ENCODE measurements at regions of chr5 and their contacts with region 1.

Region 1: GRCh38 chr5:172006321-172007174 is at the start of gene FBXW11:
- DNase-seq: peak; percentile 85 to 98 (median 92)
- ATAC-seq: peak; percentile 86
- H3K4me3 ChIP-seq: peak within 1 kb of the TSS; percentile 92
- H3K4me3 Mint-ChIP-seq: peak within 1 kb of the TSS; percentile 97
- H3K27ac ChIP-seq: peak within 1 kb of the TSS; percentile 96 to 98
- H3K27ac Mint-ChIP-seq: peak within 1 kb of the TSS; percentile 99
- H3K4me1 ChIP-seq: peaks cover 30% of the 10 kb centered on the region
- H3K4me1 Mint-ChIP-seq: peaks cover 57% of the 10 kb centered on the region
- H3K27me3 ChIP-seq: no peaks in the 10 kb centered on the region
- H3K27me3 Mint-ChIP-seq: no peaks in the 10 kb centered on the region
- CTCF ChIP-seq: no peak
- total RNA-seq, gene FBXW11: 20.9 to 24.0 TPM

Region 2: GRCh38 chr5:171152382-171152781 is 854.2 kb before region 1 on chr5:
- CTCF ChIA-PET with region 1: no interaction called
- POLR2A ChIA-PET with region 1: no interaction called
- intact Hi-C with region 1: no loop called
- DNase-seq: no peak
- ATAC-seq: no peak
- H3K4me3 ChIP-seq: no peak overlapping the region
- H3K4me3 Mint-ChIP-seq: no peak overlapping the region
- H3K27ac ChIP-seq: no peak overlapping the region
- H3K27ac Mint-ChIP-seq: no peak overlapping the region
- H3K4me1 ChIP-seq: no peaks in the 10 kb centered on the region
- H3K4me1 Mint-ChIP-seq: no peaks in the 10 kb centered on the region
- H3K27me3 ChIP-seq: no peaks in the 10 kb centered on the region
- H3K27me3 Mint-ChIP-seq: peaks cover 7% of the 10 kb centered on the region
- CTCF ChIP-seq: no peak

Region 3: DNA sequence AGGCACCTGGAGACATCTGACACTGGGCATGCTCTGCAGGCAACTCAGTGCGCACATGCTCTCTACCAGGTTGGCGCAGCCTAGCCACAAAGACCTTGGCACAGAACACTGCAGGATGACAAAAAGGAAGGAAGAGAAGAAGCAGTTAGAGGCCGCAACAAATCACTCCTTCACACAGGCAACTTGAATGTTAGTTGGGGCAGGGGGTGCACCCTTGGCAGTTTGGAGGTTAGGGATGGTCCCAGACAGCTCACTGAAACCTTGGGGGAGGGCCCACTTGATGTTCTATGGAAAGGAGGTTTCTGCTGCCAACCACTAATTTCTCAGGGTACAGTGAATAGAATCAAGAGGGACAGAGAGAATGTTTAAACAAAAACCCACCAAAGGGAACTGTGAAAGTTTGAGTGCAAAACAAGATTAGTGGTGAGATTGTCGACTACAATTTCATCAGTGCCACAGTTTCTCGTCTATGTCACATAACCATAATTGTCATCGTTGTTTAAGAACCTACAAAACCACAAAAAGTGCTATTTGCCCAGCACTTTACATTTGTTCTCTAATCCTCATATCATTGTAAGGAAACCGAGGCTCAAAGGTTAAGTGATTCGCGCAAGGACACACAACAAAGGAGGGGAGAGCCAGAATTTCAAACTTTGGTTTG is 48.8 kb before region 1 on chr5:
- CTCF ChIA-PET with region 1: no interaction called
- POLR2A ChIA-PET with region 1: interaction called, 10 read pairs
- intact Hi-C with region 1: loop called in 1 of 2 experiments (anchors 5 kb)
- DNase-seq: peak in 9 of 14 experiments; percentile 2 to 56 (median 10)
- ATAC-seq: peak; percentile 85
- H3K4me3 ChIP-seq: no peak overlapping the region
- H3K4me3 Mint-ChIP-seq: peak overlapping the region; percentile 35
- H3K27ac ChIP-seq: peak overlapping the region in 1 of 2 donors; percentile 22
- H3K27ac Mint-ChIP-seq: peak overlapping the region; percentile 84
- H3K4me1 ChIP-seq: peaks cover 19% of the 10 kb centered on the region
- H3K4me1 Mint-ChIP-seq: peaks cover 90% of the 10 kb centered on the region
- H3K27me3 ChIP-seq: no peaks in the 10 kb centered on the region
- H3K27me3 Mint-ChIP-seq: no peaks in the 10 kb centered on the region
- CTCF ChIP-seq: no peak

Region 4: DNA sequence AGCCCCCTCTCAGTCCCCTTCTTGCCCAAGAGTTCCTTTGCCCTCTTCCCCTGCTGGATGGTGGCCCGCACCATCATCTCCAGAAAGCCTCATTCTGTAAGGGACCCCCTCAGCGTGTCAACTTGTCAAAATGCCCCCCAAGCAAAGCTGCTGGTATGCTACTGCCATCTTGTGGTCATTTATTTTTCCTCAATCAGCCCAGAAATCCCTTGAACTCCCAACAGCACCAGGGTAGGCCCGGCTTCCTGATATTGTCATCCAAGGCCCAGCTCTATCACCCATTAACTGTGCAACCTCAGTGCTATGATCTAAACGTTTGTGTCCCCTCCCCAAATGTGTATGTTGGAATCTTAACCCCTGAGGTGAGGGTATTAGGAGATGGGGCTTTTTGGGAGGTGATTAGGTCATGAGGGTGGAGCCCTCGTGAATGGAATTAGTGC is 53.1 kb after region 1 on chr5:
- CTCF ChIA-PET with region 1: no interaction called
- POLR2A ChIA-PET with region 1: interaction called, 53 read pairs
- intact Hi-C with region 1: loop called in 1 of 2 experiments (anchors 5 kb)
- DNase-seq: peak in 3 of 14 experiments; percentile 23 to 48 (median 45)
- ATAC-seq: no peak
- H3K4me3 ChIP-seq: no peak overlapping the region
- H3K4me3 Mint-ChIP-seq: no peak overlapping the region
- H3K27ac ChIP-seq: peak overlapping the region in 1 of 2 donors; percentile 22
- H3K27ac Mint-ChIP-seq: peak overlapping the region; percentile 31
- H3K4me1 ChIP-seq: peaks cover 7% of the 10 kb centered on the region
- H3K4me1 Mint-ChIP-seq: peaks cover 59% of the 10 kb centered on the region
- H3K27me3 ChIP-seq: no peaks in the 10 kb centered on the region
- H3K27me3 Mint-ChIP-seq: no peaks in the 10 kb centered on the region
- CTCF ChIP-seq: peak; percentile 53

Region 5: GRCh38 chr5:172114875-172115422 is 108.4 kb after region 1 on chr5:
- CTCF ChIA-PET with region 1: no interaction called
- POLR2A ChIA-PET with region 1: interaction called, 12 read pairs
- intact Hi-C with region 1: no loop called
- DNase-seq: peak in 13 of 14 experiments; percentile 33 to 90 (median 51)
- ATAC-seq: peak; percentile 18
- H3K4me3 ChIP-seq: peak overlapping the region; percentile 19
- H3K4me3 Mint-ChIP-seq: peak overlapping the region; percentile 57
- H3K27ac ChIP-seq: peak overlapping the region; percentile 79 to 84
- H3K27ac Mint-ChIP-seq: peak overlapping the region; percentile 91
- H3K4me1 ChIP-seq: peaks cover 96% of the 10 kb centered on the region
- H3K4me1 Mint-ChIP-seq: peaks cover 82% of the 10 kb centered on the region
- H3K27me3 ChIP-seq: no peaks in the 10 kb centered on the region
- H3K27me3 Mint-ChIP-seq: no peaks in the 10 kb centered on the region
- CTCF ChIP-seq: no peak

Region 6: GRCh38 chr5:172283020-172283861 is 276.7 kb after region 1 on chr5 and contains the start of gene UBTD2:
- CTCF ChIA-PET with region 1: no interaction called
- POLR2A ChIA-PET with region 1: interaction called, 12 read pairs
- intact Hi-C with region 1: loop called in 1 of 2 experiments (anchors 2 kb)
- DNase-seq: peak in 13 of 14 experiments; percentile 37 to 86 (median 70)
- ATAC-seq: peak; percentile 69
- H3K4me3 ChIP-seq: peak within 1 kb of the TSS; percentile 81
- H3K4me3 Mint-ChIP-seq: peak within 1 kb of the TSS; percentile 95
- H3K27ac ChIP-seq: no peak within 1 kb of the TSS
- H3K27ac Mint-ChIP-seq: peak within 1 kb of the TSS; percentile 68
- H3K4me1 ChIP-seq: peaks cover 14% of the 10 kb centered on the region
- H3K4me1 Mint-ChIP-seq: peaks cover 33% of the 10 kb centered on the region
- H3K27me3 ChIP-seq: no peaks in the 10 kb centered on the region
- H3K27me3 Mint-ChIP-seq: no peaks in the 10 kb centered on the region
- CTCF ChIP-seq: peak; percentile 68
- total RNA-seq, gene UBTD2: 0.66 to 1.1 TPM